Left cardiac atrium (tissue), 4 donors: ENCODE measurements at regions of chr6 and their contacts with region 1.

Region 1: DNA sequence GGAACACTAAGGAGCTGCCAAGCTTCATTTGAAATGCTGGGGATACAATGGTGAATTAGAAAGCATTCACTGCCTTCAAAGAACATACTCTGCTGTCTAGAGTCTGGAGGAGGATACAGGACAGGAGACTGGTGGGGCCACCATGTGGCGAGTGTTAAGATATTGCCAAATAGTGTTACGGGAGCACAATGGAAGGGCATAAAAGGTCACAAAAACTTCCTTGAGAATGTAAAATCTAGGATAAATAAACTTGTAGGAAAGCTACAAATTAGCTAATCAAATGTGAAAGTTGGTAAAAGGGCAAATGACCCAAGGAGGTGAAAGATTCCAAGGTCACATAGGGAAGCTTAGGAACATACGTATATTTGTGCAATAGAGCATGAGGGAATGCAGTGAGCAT is 271.7 kb downstream of the RFPL4B start:
- DNase-seq: no peak
- ATAC-seq: peak; percentile 37 to 53

Region 2: GRCh38 chr6:112337209-112337638 is 281.6 kb before region 1 on chr6:
- intact Hi-C with region 1: loop called in 1 of 2 experiments (anchors 10 kb)
- DNase-seq: peak; percentile 58
- ATAC-seq: peak; percentile 92 to 97

Region 3: GRCh38 chr6:112502351-112503090 is 116.3 kb before region 1 on chr6:
- intact Hi-C with region 1: loop called in 1 of 2 experiments (anchors 5 kb)
- DNase-seq: no peak
- ATAC-seq: no peak

Region 4: GRCh38 chr6:112683926-112684325 is 65.1 kb after region 1 on chr6:
- intact Hi-C with region 1: no loop called
- DNase-seq: no peak
- ATAC-seq: peak; percentile 70 to 77